IMR-90 (cell line): ENCODE measurements at regions of chr13 and their contacts with region 1.

Region 1: DNA sequence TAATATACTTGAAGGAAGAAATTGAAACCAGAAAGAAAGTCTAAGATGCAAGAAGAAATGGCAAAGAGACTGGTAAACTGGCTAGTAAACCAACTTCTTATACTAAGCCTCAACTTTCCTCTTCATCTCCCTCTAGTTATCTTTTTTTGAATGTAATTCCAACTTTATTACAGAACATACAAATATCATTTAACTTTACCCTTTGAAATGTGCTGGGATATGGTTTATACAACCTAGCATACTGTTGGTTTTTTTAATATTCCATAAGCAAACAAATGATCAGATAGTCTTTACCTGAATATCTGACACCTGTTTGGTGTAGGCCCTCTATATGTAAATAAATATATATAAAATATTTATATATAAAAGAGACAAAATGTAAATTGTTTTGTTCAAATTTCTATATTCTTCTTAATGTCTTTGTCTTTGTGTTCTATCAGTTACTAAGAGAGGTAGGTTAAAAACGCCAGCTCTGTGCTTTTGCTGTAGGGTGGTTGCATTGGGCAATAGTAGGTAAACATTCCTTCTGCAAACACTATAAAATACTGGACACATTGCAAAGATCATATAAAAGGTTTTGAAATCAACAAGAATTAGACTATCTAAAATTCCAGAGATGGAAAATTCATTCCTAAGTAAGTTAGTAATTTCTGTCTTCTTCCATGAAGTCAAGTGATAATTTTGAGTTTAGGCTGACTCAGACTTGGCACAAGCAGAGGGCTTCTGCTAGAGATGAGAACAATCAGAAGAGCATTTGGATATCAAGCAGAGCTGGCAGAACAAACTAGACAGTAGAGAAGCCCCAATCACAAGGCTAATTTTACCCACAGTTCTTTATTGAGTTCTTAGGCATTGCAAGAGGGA is 383.3 kb downstream of the RFC3 start:
- DNase-seq: peak; percentile 61
- ATAC-seq: peak; percentile 46
- H3K4me3 ChIP-seq: no peak overlapping the region
- H3K27ac ChIP-seq: no peak overlapping the region
- H3K4me1 ChIP-seq: no peaks in the 10 kb centered on the region
- H3K27me3 ChIP-seq: no peaks in the 10 kb centered on the region
- CTCF ChIP-seq: no peak
- POLR2A ChIP-seq: no peak
- RAD21 ChIP-seq: no peak

Region 2: DNA sequence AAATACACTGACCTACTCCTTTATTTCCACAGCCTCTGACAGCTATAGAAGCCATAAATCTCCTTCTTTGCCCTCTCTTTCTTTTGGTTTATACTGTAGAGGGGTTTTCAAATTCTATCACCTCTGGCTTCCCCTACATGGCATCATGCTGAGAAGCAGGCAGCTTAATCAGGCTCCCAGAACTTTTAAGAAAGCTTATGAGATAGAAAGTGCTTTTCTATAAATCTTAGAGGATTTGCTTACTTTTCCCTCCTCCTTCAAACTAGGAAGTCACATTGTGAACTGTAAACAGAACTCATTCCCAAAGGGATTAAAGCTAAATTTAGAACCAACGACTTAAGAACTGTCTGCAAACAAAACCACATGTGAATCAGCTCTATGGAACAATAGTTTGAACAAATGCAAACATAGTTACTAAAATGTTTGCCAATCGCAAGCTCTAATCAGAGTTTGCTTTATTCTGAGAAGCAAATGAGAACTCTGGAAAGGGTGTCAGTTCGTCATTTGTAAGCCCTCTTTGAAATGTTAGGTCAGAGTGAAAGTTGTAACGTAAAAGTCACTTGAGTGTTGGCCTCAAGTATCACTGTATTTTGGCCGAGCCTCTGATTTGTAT is 39.2 kb before region 1 on chr13:
- CTCF ChIA-PET with region 1: no interaction called
- POLR2A ChIA-PET with region 1: no interaction called
- dilution Hi-C with region 1: no loop called
- in situ Hi-C with region 1: no loop called
- intact Hi-C with region 1: loop called (anchors 5 kb)
- DNase-seq: peak; percentile 80
- ATAC-seq: peak; percentile 56
- H3K4me3 ChIP-seq: peak overlapping the region; percentile 31; the same call in 1 of the 2 replicates
- H3K27ac ChIP-seq: no peak overlapping the region
- H3K4me1 ChIP-seq: peaks cover 8% of the 10 kb centered on the region; the same call in 1 of the 2 replicates
- H3K27me3 ChIP-seq: no peaks in the 10 kb centered on the region
- CTCF ChIP-seq: no peak
- POLR2A ChIP-seq: no peak
- RAD21 ChIP-seq: no peak